CD8-positive, alpha-beta T cell (primary cell): ENCODE measurements at regions of chr6 and their contacts with region 1.

Region 1: GRCh38 chr6:28080631-28081485 is 490 bp downstream of the ZNF165 start:
- DNase-seq: peak; percentile 86 to 96 (median 94)
- ATAC-seq: peak; percentile 74
- H3K4me3 ChIP-seq: peak overlapping the region; percentile 69 to 93
- H3K4me3 Mint-ChIP-seq: peak overlapping the region; percentile 98
- H3K27ac ChIP-seq: peak overlapping the region; percentile 91 to 96
- H3K27ac Mint-ChIP-seq: peak overlapping the region; percentile 99
- H3K4me1 ChIP-seq: peaks cover 13% of the 10 kb centered on the region
- H3K4me1 Mint-ChIP-seq: peaks cover 21% of the 10 kb centered on the region
- H3K27me3 ChIP-seq: no peaks in the 10 kb centered on the region
- H3K27me3 Mint-ChIP-seq: no peaks in the 10 kb centered on the region
- CTCF ChIP-seq: no peak

Region 2: DNA sequence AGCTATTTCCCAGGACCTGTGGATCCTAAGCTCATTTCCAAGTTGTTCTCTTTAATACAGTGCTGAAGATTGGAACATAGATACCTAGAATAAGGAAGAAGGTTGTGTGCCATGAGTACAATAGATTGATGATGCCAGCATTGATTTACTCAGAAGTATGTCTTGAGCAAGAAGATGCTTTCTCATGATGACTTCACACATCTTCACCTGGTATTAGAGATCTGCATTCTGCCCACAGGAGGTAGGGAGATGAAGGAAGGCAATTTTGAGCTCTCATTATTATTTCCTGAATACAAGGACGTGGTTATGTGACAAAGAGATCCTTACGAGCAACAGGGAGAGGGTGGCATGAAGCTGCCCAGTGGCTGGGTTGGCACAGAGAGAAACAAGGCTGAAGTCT is 20.5 kb before region 1 on chr6:
- CTCF ChIA-PET with region 1: no interaction called
- POLR2A ChIA-PET with region 1: no interaction called
- intact Hi-C with region 1: no loop called
- DNase-seq: no peak
- ATAC-seq: no peak
- H3K4me3 ChIP-seq: no peak overlapping the region
- H3K4me3 Mint-ChIP-seq: no peak overlapping the region
- H3K27ac ChIP-seq: no peak overlapping the region
- H3K27ac Mint-ChIP-seq: no peak overlapping the region
- H3K4me1 ChIP-seq: no peaks in the 10 kb centered on the region
- H3K4me1 Mint-ChIP-seq: no peaks in the 10 kb centered on the region
- H3K27me3 ChIP-seq: peaks cover 0 to 4% of the 10 kb centered on the region in 2 experiments
- H3K27me3 Mint-ChIP-seq: peaks cover 33% of the 10 kb centered on the region
- CTCF ChIP-seq: no peak

Region 3: DNA sequence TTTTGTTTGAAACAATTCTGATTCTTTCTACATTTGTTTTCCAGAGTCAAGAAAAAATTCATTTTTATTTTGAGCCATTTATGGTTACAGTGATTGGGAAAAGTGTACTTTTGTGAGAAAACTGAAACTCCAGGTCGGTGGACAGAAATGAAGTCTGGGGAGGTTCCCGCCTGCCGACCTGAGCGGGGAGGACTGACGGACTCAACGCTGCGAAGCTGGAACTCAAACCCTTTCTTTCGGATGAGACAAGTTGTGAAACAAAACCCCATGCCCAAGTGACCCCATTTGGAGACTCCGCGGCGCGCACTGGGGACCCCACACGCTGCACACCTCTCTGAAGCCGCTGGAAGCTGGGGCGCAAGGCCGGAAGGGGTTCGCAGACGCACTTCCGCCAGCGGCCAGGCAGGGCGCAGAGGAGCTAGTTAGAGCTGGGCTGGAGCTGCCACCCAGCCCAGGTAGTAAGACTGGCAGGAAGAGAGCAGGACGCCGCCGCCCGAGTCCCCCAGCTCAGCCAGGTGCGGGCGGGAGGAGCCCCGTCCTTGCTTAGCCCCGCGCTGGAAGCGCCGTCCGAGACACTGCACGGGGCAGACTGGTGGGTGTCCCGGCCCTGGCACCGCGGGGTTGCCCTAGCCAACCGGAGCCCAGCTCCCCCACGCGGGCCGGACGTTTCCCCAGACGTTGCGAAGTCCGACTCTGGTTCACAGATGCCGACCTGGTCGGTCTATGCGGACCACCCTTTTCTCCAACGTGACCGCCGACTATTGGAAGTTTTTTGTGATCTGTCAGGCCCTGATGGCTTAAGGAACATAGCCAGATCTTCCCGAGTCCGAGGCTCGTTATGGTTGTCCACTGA is 23.8 kb after region 1 on chr6:
- CTCF ChIA-PET with region 1: interaction called, 3 read pairs
- POLR2A ChIA-PET with region 1: no interaction called
- intact Hi-C with region 1: loop called (anchors 1 kb)
- DNase-seq: peak; percentile 76 to 93 (median 85)
- ATAC-seq: peak; percentile 99
- H3K4me3 ChIP-seq: peak overlapping the region; percentile 69 to 73
- H3K4me3 Mint-ChIP-seq: peak overlapping the region; percentile 90
- H3K27ac ChIP-seq: peak overlapping the region; percentile 53 to 83
- H3K27ac Mint-ChIP-seq: peak overlapping the region; percentile 89
- H3K4me1 ChIP-seq: peaks cover 5% of the 10 kb centered on the region
- H3K4me1 Mint-ChIP-seq: peaks cover 11% of the 10 kb centered on the region
- H3K27me3 ChIP-seq: no peaks in the 10 kb centered on the region
- H3K27me3 Mint-ChIP-seq: peaks cover under 1% of the 10 kb centered on the region
- CTCF ChIP-seq: peak; percentile 60

Region 4: DNA sequence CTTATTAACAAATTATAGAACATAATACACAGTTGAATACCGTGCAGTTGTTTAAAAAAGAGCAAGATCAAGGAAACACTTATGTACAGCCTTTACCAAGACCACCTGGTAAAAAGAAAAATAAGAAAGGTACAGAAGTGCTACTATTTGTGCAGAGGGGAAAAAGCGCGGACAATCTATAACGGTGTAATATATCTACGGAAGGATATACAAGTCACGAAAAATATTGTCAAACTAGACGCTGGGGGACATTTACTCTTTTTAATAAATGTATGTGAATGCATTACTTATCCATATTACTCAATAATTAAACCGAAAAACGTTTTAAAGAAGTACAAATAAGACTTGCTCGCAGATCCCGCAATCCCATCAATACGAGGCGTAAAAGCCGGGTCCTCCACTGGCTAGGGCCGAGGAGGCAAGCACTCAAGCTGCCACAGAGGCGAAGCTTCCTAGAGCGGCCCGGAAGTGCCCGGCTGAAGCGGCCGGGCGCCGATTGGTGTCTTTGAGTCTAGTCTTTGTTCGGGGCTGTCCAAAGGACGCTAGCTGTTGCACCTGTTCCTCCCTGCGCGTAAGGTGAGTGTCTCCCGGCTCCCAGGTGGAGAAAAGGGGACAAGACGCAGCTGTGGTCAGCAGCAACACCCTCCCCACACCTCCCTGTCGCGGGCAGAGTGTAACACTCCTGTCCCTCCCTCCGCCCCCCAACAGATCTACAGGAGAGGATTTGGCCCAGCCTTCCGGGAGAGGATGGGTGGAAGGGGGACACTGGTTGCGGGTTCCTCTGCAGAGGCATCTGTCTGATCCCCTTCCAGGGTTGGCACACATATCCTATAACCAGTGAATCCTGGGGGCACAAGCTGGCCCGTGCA is 43.5 kb after region 1 on chr6 and contains the start of gene ZSCAN16:
- CTCF ChIA-PET with region 1: no interaction called
- POLR2A ChIA-PET with region 1: no interaction called
- intact Hi-C with region 1: loop called (anchors 1 to 5 kb)
- DNase-seq: peak; percentile 59 to 86 (median 76)
- ATAC-seq: peak; percentile 72
- H3K4me3 ChIP-seq: peak within 1 kb of the TSS; percentile 79 to 86
- H3K4me3 Mint-ChIP-seq: peak within 1 kb of the TSS; percentile 95
- H3K27ac ChIP-seq: peak within 1 kb of the TSS; percentile 76 to 89
- H3K27ac Mint-ChIP-seq: peak within 1 kb of the TSS; percentile 97
- H3K4me1 ChIP-seq: peaks cover 11% of the 10 kb centered on the region
- H3K4me1 Mint-ChIP-seq: peaks cover 42% of the 10 kb centered on the region
- H3K27me3 ChIP-seq: no peaks in the 10 kb centered on the region
- H3K27me3 Mint-ChIP-seq: no peaks in the 10 kb centered on the region
- CTCF ChIP-seq: no peak
- total RNA-seq, gene ZSCAN16: 5.2 to 6.0 TPM

Region 5: GRCh38 chr6:28335564-28336283 is 254.9 kb after region 1 on chr6 and contains the start of gene ZSCAN31:
- CTCF ChIA-PET with region 1: no interaction called
- POLR2A ChIA-PET with region 1: no interaction called
- intact Hi-C with region 1: loop called in 1 of 2 experiments (anchors 5 kb)
- DNase-seq: peak; percentile 64 to 94 (median 80)
- ATAC-seq: peak; percentile 86
- H3K4me3 ChIP-seq: peak within 1 kb of the TSS; percentile 77 to 85
- H3K4me3 Mint-ChIP-seq: no peak within 1 kb of the TSS
- H3K27ac ChIP-seq: peak within 1 kb of the TSS; percentile 94 to 96
- H3K27ac Mint-ChIP-seq: no peak within 1 kb of the TSS
- H3K4me1 ChIP-seq: peaks cover 15% of the 10 kb centered on the region
- H3K4me1 Mint-ChIP-seq: peaks cover 9% of the 10 kb centered on the region
- H3K27me3 ChIP-seq: no peaks in the 10 kb centered on the region
- H3K27me3 Mint-ChIP-seq: no peaks in the 10 kb centered on the region
- CTCF ChIP-seq: no peak
- total RNA-seq, gene ZSCAN31: 1.4 to 1.9 TPM

Region 6: GRCh38 chr6:28880894-28881780 is 800.3 kb after region 1 on chr6:
- CTCF ChIA-PET with region 1: no interaction called
- POLR2A ChIA-PET with region 1: no interaction called
- intact Hi-C with region 1: loop called in 1 of 2 experiments (anchors 5 kb)
- DNase-seq: peak; percentile 14 to 81 (median 53)
- ATAC-seq: no peak
- H3K4me3 ChIP-seq: peak overlapping the region; percentile 37 to 45
- H3K4me3 Mint-ChIP-seq: peak overlapping the region; percentile 86
- H3K27ac ChIP-seq: no peak overlapping the region
- H3K27ac Mint-ChIP-seq: peak overlapping the region; percentile 89
- H3K4me1 ChIP-seq: peaks cover 29% of the 10 kb centered on the region
- H3K4me1 Mint-ChIP-seq: peaks cover 52% of the 10 kb centered on the region
- H3K27me3 ChIP-seq: peaks cover 0 to 3% of the 10 kb centered on the region in 2 experiments
- H3K27me3 Mint-ChIP-seq: peaks cover 4% of the 10 kb centered on the region
- CTCF ChIP-seq: no peak

Region 7: GRCh38 chr6:30061092-30061857 is 1980.4 kb after region 1 on chr6 and contains the start of gene POLR1H:
- CTCF ChIA-PET with region 1: no interaction called
- POLR2A ChIA-PET with region 1: no interaction called
- intact Hi-C with region 1: loop called in 1 of 2 experiments (anchors 5 kb)
- DNase-seq: peak; percentile 68 to 96 (median 87)
- ATAC-seq: peak; percentile 87
- H3K4me3 ChIP-seq: peak within 1 kb of the TSS; percentile 82 to 87
- H3K4me3 Mint-ChIP-seq: peak within 1 kb of the TSS; percentile 97
- H3K27ac ChIP-seq: peak within 1 kb of the TSS; percentile 89 to 93
- H3K27ac Mint-ChIP-seq: peak within 1 kb of the TSS; percentile 99
- H3K4me1 ChIP-seq: peaks cover 29% of the 10 kb centered on the region
- H3K4me1 Mint-ChIP-seq: peaks cover 56% of the 10 kb centered on the region
- H3K27me3 ChIP-seq: no peaks in the 10 kb centered on the region
- H3K27me3 Mint-ChIP-seq: no peaks in the 10 kb centered on the region
- CTCF ChIP-seq: no peak
- total RNA-seq, gene POLR1H: 26.6 to 30.7 TPM